OCI-LY7 (cell line): ENCODE measurements at regions of chrX and their contacts with region 1.

Region 1: DNA sequence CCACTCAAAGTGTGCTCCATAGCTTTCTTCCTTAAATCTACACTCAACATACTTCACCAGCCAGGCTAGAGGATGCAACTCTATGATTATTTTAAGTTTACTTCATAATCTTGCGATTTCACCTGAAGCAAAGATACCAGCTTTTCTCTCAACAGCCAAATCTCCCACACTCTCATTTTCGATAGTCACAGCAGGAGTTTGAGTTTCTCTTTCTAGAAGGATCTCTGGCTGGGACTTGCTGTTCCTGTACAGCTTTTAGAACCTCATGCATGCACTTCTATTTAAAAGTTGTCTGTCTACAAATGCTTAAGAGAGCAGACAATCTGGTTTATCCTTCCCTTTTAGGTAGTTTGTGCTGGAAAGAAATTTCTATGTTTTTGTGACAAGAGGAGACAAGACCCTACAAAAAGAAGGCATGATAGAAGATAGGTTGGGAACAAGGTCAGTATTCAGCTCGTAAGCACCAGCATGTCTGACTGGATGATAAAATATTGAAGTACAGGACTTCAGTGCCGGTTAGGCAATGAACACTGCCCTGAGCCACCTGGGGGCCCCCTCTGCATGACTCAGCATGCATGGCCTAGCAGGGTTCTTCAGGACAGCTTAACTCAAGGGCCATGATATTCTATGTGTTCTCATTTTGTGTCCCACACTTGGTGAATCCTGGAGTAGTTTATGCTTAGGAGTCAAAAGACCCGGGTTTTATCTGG is 65.6 kb downstream of the ATXN3L start:
- DNase-seq: peak; percentile 24
- H3K4me3 ChIP-seq: no peak overlapping the region
- H3K27ac ChIP-seq: no peak overlapping the region
- H3K4me1 ChIP-seq: peaks cover 6% of the 10 kb centered on the region
- CTCF ChIP-seq: 0 out of 2 replicates have a peak, but pooled peaks have one; percentile 15

Region 2: DNA sequence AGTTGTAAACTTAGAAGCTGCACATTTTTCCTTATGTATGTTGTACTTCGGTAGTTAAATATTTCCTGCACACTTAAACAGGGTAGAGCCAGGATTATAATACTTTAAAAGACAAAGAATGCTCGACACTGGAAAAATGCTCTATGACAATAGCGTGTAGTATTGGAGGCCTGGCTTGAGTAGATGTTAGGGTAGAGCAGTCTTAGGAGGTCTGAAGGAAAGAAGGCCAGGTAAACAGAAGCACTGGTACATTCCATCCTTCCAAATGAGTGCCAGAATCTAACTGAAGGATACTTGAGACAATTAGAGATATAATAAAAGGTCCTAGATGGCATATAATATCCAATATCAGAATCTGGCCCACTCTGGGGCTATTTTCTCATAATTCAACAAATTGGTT is 23.3 kb after region 1 on chrX:
- CTCF ChIA-PET with region 1: no interaction called
- POLR2A ChIA-PET with region 1: interaction called, 11 read pairs
- intact Hi-C with region 1: no loop called
- DNase-seq: no peak
- H3K4me3 ChIP-seq: no peak overlapping the region
- H3K27ac ChIP-seq: no peak overlapping the region
- H3K4me1 ChIP-seq: no peaks in the 10 kb centered on the region
- CTCF ChIP-seq: no peak

Region 3: DNA sequence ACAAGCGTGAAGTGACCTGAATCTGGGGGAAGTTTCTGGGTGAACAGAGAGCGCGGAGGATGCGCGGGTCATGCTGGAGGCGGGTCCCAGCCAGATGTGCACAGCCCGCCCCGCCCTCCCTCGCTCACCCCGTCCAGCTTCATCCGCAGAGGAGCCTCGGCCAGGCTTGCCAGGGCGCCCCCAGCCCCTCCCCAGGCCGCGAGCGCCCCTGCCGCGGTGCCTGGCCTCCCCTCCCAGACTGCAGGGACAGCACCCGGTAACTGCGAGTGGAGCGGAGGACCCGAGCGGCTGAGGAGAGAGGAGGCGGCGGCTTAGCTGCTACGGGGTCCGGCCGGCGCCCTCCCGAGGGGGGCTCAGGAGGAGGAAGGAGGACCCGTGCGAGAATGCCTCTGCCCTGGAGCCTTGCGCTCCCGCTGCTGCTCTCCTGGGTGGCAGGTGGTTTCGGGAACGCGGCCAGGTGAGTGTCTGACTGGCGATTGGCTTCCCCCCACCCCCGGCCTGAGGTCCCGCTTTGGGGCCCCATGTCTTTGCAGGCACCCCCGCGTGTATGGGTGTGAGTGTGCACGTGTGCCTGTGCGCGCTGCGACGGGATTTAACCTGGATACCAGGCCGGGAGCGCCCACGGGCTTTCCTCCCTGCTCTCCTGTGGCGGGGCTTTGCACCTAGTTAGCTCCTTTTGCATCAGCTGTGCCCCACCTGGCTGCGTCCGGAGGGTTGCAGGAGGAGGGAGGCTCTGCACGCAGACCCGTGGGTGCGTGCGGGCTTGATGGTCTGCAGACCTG is 315.4 kb after region 1 on chrX and contains the start of gene EGFL6:
- CTCF ChIA-PET with region 1: no interaction called
- POLR2A ChIA-PET with region 1: no interaction called
- intact Hi-C with region 1: no loop called
- DNase-seq: no peak
- H3K4me3 ChIP-seq: no peak within 1 kb of the TSS
- H3K27ac ChIP-seq: no peak within 1 kb of the TSS
- H3K4me1 ChIP-seq: no peaks in the 10 kb centered on the region
- CTCF ChIP-seq: no peak
- total RNA-seq, gene EGFL6: not detected in 2 replicates